WTC11 (cell line): ENCODE measurements at regions of chr2 and their contacts with region 1.

Region 1: GRCh38 chr2:233449081-233449901 is 95.0 kb downstream of the DGKD start:
- DNase-seq: peak; percentile 81
- ATAC-seq: peak; percentile 87
- H3K4me3 Mint-ChIP-seq: no peak overlapping the region
- H3K27ac Mint-ChIP-seq: 0 out of 2 replicates have a peak overlapping the region, but pooled peaks have one; percentile 45
- H3K4me1 Mint-ChIP-seq: peaks cover 8% of the 10 kb centered on the region
- H3K27me3 Mint-ChIP-seq: no peaks in the 10 kb centered on the region
- CTCF ChIP-seq: peak; percentile 55

Region 2: DNA sequence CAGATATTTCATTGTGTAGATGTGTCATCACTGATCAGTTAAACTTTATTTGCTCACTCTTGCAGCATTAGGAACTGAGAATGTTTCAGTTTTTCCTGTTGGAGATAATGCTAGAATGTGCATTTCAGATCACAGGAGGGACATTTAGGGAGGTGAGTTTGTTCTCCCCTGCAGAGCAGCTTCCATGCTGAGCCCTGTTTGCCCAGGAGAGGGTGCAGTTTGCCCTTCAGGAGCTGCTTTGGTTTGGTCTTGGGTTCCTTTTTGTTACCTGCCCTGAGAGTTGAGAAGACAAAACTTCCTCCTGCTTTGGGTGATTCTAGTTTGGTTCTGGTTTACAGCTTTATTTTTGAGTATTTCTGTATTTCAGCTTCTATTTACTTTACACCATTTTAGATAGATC is 45.1 kb before region 1 on chr2:
- CTCF ChIA-PET with region 1: interaction called, 32 read pairs
- POLR2A ChIA-PET with region 1: no interaction called
- DNase-seq: peak; percentile 51
- ATAC-seq: peak; percentile 61
- H3K4me3 Mint-ChIP-seq: no peak overlapping the region
- H3K27ac Mint-ChIP-seq: no peak overlapping the region
- H3K4me1 Mint-ChIP-seq: peaks cover 27% of the 10 kb centered on the region
- H3K27me3 Mint-ChIP-seq: no peaks in the 10 kb centered on the region
- CTCF ChIP-seq: no peak; the same call in 1 of the 2 replicates

Region 3: GRCh38 chr2:233470011-233470687 is 20.9 kb after region 1 on chr2:
- CTCF ChIA-PET with region 1: interaction called, 14 read pairs
- POLR2A ChIA-PET with region 1: no interaction called
- DNase-seq: no peak
- ATAC-seq: no peak
- H3K4me3 Mint-ChIP-seq: no peak overlapping the region
- H3K27ac Mint-ChIP-seq: no peak overlapping the region
- H3K4me1 Mint-ChIP-seq: peaks cover 4% of the 10 kb centered on the region; the same call in 1 of the 2 replicates
- H3K27me3 Mint-ChIP-seq: no peaks in the 10 kb centered on the region
- CTCF ChIP-seq: no peak

Region 4: DNA sequence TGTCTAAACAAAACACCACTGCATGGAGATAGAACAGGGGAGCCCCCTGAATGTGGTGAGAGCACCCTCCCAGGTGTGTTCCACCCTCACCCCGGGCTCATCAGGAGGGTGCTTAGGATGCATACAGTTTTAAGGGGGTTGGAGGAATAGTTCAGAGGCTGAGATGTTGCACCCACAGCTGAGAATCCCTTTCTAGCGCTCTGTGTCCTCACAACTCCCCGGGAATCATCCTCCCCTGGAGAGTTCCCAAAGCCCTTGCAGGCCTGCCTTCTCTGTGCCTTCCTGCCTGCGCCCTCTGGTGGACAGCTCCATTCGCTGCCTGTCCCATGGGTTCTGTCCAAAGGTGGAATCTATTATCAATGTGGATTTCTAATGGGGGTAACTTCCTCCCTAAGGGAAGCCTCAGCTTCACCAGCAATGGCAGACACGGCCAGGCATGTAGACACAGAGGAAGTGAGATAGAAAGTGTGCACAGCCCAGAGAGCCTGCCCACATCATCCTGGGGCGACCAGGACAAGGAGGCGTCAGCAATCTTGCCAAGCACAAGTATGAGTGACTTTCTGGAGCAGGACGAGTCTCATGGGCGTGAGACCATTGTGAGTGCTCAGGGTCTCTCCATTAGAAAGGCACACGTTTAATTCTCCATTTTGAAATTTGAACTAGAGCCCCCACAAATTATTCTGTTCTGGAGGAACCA is 262.2 kb after region 1 on chr2:
- CTCF ChIA-PET with region 1: interaction called, 19 read pairs
- POLR2A ChIA-PET with region 1: no interaction called
- DNase-seq: peak; percentile 89
- ATAC-seq: peak; percentile 97
- H3K4me3 Mint-ChIP-seq: no peak overlapping the region
- H3K27ac Mint-ChIP-seq: no peak overlapping the region
- H3K4me1 Mint-ChIP-seq: peaks cover 4% of the 10 kb centered on the region; the same call in 1 of the 2 replicates
- H3K27me3 Mint-ChIP-seq: no peaks in the 10 kb centered on the region; the same call in 1 of the 2 replicates
- CTCF ChIP-seq: peak; percentile 80

Region 5: GRCh38 chr2:233928594-233929351 is 479.5 kb after region 1 on chr2:
- CTCF ChIA-PET with region 1: no interaction called
- POLR2A ChIA-PET with region 1: no interaction called
- DNase-seq: peak; percentile 67
- ATAC-seq: 0 out of 2 replicates have a peak, but pooled peaks have one; percentile 19
- H3K4me3 Mint-ChIP-seq: no peak overlapping the region
- H3K27ac Mint-ChIP-seq: peak overlapping the region; percentile 34; the same call in 1 of the 2 replicates
- H3K4me1 Mint-ChIP-seq: peaks cover 26% of the 10 kb centered on the region
- H3K27me3 Mint-ChIP-seq: no peaks in the 10 kb centered on the region
- CTCF ChIP-seq: peak; percentile 50; the same call in 1 of the 2 replicates